Endothelial cell of umbilical vein (primary cell): ENCODE measurements at regions of chr17 and their contacts with region 1.

Region 1: DNA sequence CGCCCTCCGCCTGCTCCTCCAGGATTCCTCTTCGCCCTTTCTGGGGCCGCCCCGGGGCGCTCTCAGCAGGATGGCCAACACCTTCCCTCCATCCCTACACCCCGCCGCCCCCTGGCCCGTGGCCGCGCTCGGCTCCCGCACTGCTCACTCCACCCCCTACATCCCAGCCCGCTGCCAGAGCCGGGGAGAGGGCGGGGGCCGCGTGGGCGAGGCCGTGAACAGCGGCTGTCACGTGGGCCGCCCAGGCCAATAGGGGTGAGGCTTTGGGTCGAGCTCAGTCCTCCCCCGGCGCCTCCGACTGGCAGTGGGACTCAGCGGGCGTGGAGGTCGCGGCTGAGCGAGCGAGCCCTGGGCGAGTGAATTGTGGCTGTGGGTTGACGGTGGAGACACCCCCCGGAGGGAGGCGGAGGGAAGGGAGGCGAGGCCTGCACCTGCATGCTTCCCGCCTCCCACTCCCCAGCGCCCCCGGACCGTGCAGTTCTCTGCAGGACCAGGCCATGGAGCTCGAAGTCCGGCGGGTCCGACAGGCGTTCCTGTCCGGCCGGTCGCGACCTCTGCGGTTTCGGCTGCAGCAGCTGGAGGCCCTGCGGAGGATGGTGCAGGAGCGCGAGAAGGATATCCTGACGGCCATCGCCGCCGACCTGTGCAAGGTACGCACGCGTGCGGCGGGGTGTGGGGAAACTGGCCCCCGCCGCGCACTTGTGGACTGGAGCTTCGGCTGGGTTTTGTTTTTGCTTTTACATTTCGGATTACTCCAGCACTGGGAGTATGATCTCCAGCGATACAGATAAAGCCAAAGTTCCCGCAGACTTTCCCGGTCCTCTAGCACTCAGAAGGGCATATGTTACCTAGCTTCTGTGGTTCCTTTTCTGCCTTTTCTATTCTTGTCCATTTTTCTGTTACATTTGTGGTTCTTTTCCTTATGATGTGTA is at the start of gene ALDH3A2:
- DNase-seq: peak; percentile 94
- H3K4me3 ChIP-seq: peak within 1 kb of the TSS; percentile 16 to 97 (median 88)
- H3K27ac ChIP-seq: peak within 1 kb of the TSS; percentile 59
- H3K4me1 ChIP-seq: peaks cover 26% of the 10 kb centered on the region
- H3K27me3 ChIP-seq: no peaks in the 10 kb centered on the region
- CTCF ChIP-seq: peak in 1 of 2 donors; percentile 20
- POLR2A ChIP-seq: peak; percentile 88
- total RNA-seq, gene ALDH3A2: 28.1 and 36.5 TPM in 2 replicates

Region 2: GRCh38 chr17:19362277-19363113 is 286.2 kb before region 1 on chr17 and contains the start of gene B9D1:
- CTCF ChIA-PET with region 1: interaction called, 14 read pairs
- POLR2A ChIA-PET with region 1: no interaction called
- dilution Hi-C with region 1: no loop called
- intact Hi-C with region 1: loop called (anchors 1 kb)
- DNase-seq: peak; percentile 93
- H3K4me3 ChIP-seq: peak within 1 kb of the TSS; percentile 53 to 66 (median 60)
- H3K27ac ChIP-seq: peak within 1 kb of the TSS; percentile 49
- H3K4me1 ChIP-seq: peaks cover 8% of the 10 kb centered on the region
- H3K27me3 ChIP-seq: no peaks in the 10 kb centered on the region
- CTCF ChIP-seq: peak; percentile 88 to 95
- POLR2A ChIP-seq: peak; percentile 10
- total RNA-seq, gene B9D1: 17.9 and 20.5 TPM in 2 replicates

Region 3: GRCh38 chr17:19630661-19631060 is 18.1 kb before region 1 on chr17:
- CTCF ChIA-PET with region 1: interaction called, 16 read pairs
- POLR2A ChIA-PET with region 1: no interaction called
- dilution Hi-C with region 1: no loop called
- intact Hi-C with region 1: no loop called
- DNase-seq: no peak
- H3K4me3 ChIP-seq: no peak overlapping the region
- H3K27ac ChIP-seq: no peak overlapping the region
- H3K4me1 ChIP-seq: no peaks in the 10 kb centered on the region
- H3K27me3 ChIP-seq: peaks cover 0 to 12% of the 10 kb centered on the region in 2 experiments
- CTCF ChIP-seq: no peak
- POLR2A ChIP-seq: no peak

Region 4: DNA sequence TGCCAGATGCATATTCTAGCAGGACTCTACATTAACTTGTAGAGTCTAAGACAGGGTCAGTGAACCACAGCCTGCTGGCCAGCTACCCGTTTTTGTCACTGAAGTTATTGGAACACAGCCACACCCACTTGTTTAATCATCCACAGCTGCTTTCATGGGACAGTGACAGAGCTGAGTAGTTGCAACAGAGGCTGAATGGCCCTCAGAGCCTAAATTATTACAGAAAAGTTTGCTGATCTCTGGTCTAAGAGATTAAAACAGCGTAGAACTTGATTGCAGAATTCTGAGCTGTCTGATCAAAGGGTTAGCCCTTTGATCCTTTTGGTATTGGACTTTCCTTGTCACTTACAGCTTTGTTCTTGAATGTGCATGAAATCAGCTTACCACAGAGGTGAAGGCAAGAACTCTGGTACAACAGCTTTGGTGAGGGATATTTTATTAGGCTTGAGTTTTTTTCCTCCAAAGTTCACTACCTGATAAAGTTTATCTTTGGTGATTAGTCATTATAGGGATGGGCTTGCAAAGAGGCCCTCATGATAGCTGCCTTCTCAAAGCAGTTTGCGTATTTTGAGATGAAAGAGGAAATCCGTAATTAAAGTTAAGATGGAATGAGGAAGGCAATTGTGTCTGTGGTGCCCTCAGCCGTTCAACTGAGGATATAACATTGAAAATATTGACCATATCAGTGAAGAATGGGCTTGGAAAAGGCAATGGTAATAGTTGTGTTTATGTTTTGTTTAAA is 23.4 kb after region 1 on chr17:
- CTCF ChIA-PET with region 1: interaction called, 14 read pairs
- POLR2A ChIA-PET with region 1: no interaction called
- dilution Hi-C with region 1: no loop called
- intact Hi-C with region 1: no loop called
- DNase-seq: peak; percentile 11
- H3K4me3 ChIP-seq: no peak overlapping the region
- H3K27ac ChIP-seq: no peak overlapping the region
- H3K4me1 ChIP-seq: no peaks in the 10 kb centered on the region
- H3K27me3 ChIP-seq: no peaks in the 10 kb centered on the region
- CTCF ChIP-seq: no peak
- POLR2A ChIP-seq: no peak

Region 5: GRCh38 chr17:19744922-19745757 is 96.4 kb after region 1 on chr17:
- CTCF ChIA-PET with region 1: interaction called, 29 read pairs
- POLR2A ChIA-PET with region 1: no interaction called
- dilution Hi-C with region 1: no loop called
- intact Hi-C with region 1: loop called (anchors 2 kb)
- DNase-seq: peak; percentile 84
- H3K4me3 ChIP-seq: peak overlapping the region in 1 of 3 experiments; percentile 37
- H3K27ac ChIP-seq: no peak overlapping the region
- H3K4me1 ChIP-seq: peaks cover 5% of the 10 kb centered on the region
- H3K27me3 ChIP-seq: no peaks in the 10 kb centered on the region
- CTCF ChIP-seq: peak; percentile 90 to 99
- POLR2A ChIP-seq: no peak